ENCODE measurements at regions of chr1 and their contacts with region 1.

Region 1: GRCh38 chr1:4652631-4653327 is 1.6 kb upstream of the AJAP1 start:
- DNase-seq: peak; percentile 15
- H3K4me3 ChIP-seq: no peak overlapping the region
- H3K27ac ChIP-seq: no peak overlapping the region
- H3K4me1 ChIP-seq: no peaks in the 10 kb centered on the region
- H3K27me3 ChIP-seq: peaks cover 20 to 24% of the 10 kb centered on the region in 2 experiments
- CTCF ChIP-seq: peak; percentile 86 to 97
- POLR2A ChIP-seq: no peak

Region 2: DNA sequence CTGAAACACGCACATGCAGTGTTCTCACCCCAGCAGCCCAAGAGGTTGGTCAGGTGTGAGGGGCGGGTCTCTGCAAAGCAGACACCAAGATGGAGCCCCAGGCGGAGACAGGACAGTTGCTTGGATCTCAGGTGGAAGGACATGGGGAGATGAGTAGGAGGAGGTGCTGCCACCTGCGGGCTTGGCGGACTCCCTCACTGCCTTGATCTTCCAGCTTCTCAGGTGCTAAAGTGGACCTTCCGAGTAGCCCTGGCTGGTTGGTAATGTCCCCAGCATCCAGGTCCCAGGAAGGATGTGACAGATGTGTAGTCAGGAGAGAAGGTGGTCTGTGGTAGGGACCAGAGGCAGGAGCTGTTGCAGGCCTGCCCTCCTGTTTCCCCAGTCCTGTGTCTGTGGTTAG is 115.8 kb after region 1 on chr1:
- CTCF ChIA-PET with region 1: no interaction called
- POLR2A ChIA-PET with region 1: no interaction called
- dilution Hi-C with region 1: no loop called
- intact Hi-C with region 1: no loop called
- DNase-seq: no peak
- H3K4me3 ChIP-seq: no peak overlapping the region
- H3K27ac ChIP-seq: no peak overlapping the region
- H3K4me1 ChIP-seq: no peaks in the 10 kb centered on the region
- H3K27me3 ChIP-seq: no peaks in the 10 kb centered on the region
- CTCF ChIP-seq: no peak
- POLR2A ChIP-seq: no peak

Region 3: DNA sequence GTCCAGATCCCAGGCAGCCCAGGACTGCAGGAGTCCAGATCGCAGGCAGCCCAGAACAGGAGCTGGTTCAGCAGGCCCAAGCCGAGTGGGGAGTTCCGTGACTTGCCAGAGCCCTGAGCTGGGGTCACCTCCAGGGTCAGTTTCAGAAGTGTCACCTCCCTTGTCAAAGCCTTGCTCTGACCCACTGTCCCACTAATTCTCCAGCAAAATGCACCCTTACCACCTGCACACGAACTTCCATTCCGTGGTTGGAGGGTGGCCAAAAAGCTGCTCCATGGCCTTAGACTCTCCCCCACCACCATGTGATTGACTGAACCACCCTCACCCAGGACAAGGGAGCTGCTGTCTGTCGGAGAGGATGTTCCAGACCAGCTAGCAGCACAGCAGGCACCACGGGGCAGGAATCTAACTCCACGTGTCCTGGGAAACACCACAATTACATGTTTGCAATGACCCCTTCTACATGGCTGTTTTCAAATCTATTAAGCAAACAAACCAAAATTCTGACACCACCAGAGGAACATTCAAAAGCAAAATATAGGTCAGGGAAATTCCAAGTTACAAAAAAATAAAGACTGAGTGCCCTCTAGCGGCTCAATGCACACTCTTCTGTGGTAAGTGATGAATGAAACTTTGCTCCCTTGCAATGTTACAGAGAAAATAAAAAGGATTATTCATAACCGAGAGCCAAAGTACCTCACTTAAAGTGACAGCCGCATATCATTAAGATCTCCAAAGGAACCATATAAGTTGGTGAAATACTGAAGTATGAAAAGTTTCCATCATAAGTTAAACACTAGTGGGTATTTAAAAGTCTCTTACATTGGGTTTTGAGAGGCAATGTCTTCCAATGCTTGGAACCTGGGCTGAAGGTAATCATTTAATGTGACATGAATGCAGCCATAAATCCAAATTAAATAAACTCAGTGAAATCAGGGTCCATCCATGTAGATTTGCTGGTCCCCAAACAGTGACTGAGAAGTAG is 1263.1 kb after region 1 on chr1:
- CTCF ChIA-PET with region 1: interaction called, 3 read pairs
- POLR2A ChIA-PET with region 1: no interaction called
- dilution Hi-C with region 1: no loop called
- intact Hi-C with region 1: loop called (anchors 2 kb)
- DNase-seq: peak; percentile 40
- H3K4me3 ChIP-seq: no peak overlapping the region
- H3K27ac ChIP-seq: no peak overlapping the region
- H3K4me1 ChIP-seq: no peaks in the 10 kb centered on the region
- H3K27me3 ChIP-seq: no peaks in the 10 kb centered on the region
- CTCF ChIP-seq: peak; percentile 46 to 61
- POLR2A ChIP-seq: no peak

Measured in endothelial cell of umbilical vein (primary cell).